Naive thymus-derived CD4-positive, alpha-beta T cell (primary cell): ENCODE measurements at regions of chr1 and their contacts with region 1.

Region 1: GRCh38 chr1:19762175-19762779 is 37.4 kb downstream of the TMCO4 start:
- DNase-seq: peak in 5 of 9 donors; percentile 6 to 32 (median 12)
- ATAC-seq: peak; percentile 41
- H3K4me3 ChIP-seq: no peak overlapping the region
- H3K4me3 Mint-ChIP-seq: no peak overlapping the region
- H3K27ac ChIP-seq: no peak overlapping the region
- H3K27ac Mint-ChIP-seq: no peak overlapping the region
- H3K4me1 ChIP-seq: no peaks in the 10 kb centered on the region
- H3K4me1 Mint-ChIP-seq: peaks cover 0 to 16% (median 0%) of the 10 kb centered on the region in 7 donors
- H3K27me3 ChIP-seq: no peaks in the 10 kb centered on the region
- H3K27me3 Mint-ChIP-seq: no peaks in the 10 kb centered on the region

Region 2: GRCh38 chr1:19799877-19800804 is 37.9 kb after region 1 on chr1 and contains the start of gene TMCO4:
- CTCF ChIA-PET with region 1: no interaction called
- POLR2A ChIA-PET with region 1: no interaction called
- intact Hi-C with region 1: loop called in 1 of 2 experiments (anchors 5 kb)
- DNase-seq: peak in 8 of 9 donors; percentile 26 to 64 (median 58)
- ATAC-seq: peak; percentile 68
- H3K4me3 ChIP-seq: peak within 1 kb of the TSS; percentile 66
- H3K4me3 Mint-ChIP-seq: peak within 1 kb of the TSS; percentile 88 to 98 (median 93)
- H3K27ac ChIP-seq: peak within 1 kb of the TSS; percentile 66
- H3K27ac Mint-ChIP-seq: peak within 1 kb of the TSS; percentile 93 to 99 (median 98)
- H3K4me1 ChIP-seq: peaks cover 0 to 10% of the 10 kb centered on the region in 2 donors
- H3K4me1 Mint-ChIP-seq: peaks cover 5 to 35% (median 33%) of the 10 kb centered on the region in 7 donors
- H3K27me3 ChIP-seq: no peaks in the 10 kb centered on the region
- H3K27me3 Mint-ChIP-seq: peaks cover 0 to 8% (median 0%) of the 10 kb centered on the region in 5 donors
- total RNA-seq, gene TMCO4: 16.6 to 28.3 (median 18.2) TPM

Region 3: GRCh38 chr1:19811206-19811851 is 49.1 kb after region 1 on chr1:
- CTCF ChIA-PET with region 1: interaction called, 5 read pairs
- POLR2A ChIA-PET with region 1: no interaction called
- intact Hi-C with region 1: loop called (anchors 1 kb)
- DNase-seq: peak in 7 of 9 donors; percentile 10 to 53 (median 31)
- ATAC-seq: peak; percentile 68
- H3K4me3 ChIP-seq: no peak overlapping the region
- H3K4me3 Mint-ChIP-seq: no peak overlapping the region
- H3K27ac ChIP-seq: no peak overlapping the region
- H3K27ac Mint-ChIP-seq: peak overlapping the region in 1 of 9 donors; percentile 62
- H3K4me1 ChIP-seq: no peaks in the 10 kb centered on the region
- H3K4me1 Mint-ChIP-seq: no peaks in the 10 kb centered on the region
- H3K27me3 ChIP-seq: no peaks in the 10 kb centered on the region
- H3K27me3 Mint-ChIP-seq: peaks cover 0 to 6% (median 0%) of the 10 kb centered on the region in 5 donors

Region 4: GRCh38 chr1:19903600-19903999 is 141.3 kb after region 1 on chr1:
- CTCF ChIA-PET with region 1: no interaction called
- POLR2A ChIA-PET with region 1: no interaction called
- intact Hi-C with region 1: no loop called
- DNase-seq: no peak
- ATAC-seq: no peak
- H3K4me3 ChIP-seq: no peak overlapping the region
- H3K4me3 Mint-ChIP-seq: no peak overlapping the region
- H3K27ac ChIP-seq: no peak overlapping the region
- H3K27ac Mint-ChIP-seq: no peak overlapping the region
- H3K4me1 ChIP-seq: no peaks in the 10 kb centered on the region
- H3K4me1 Mint-ChIP-seq: peaks cover 0 to 6% (median 0%) of the 10 kb centered on the region in 7 donors
- H3K27me3 ChIP-seq: no peaks in the 10 kb centered on the region
- H3K27me3 Mint-ChIP-seq: no peaks in the 10 kb centered on the region